Activated naive CD4-positive, alpha-beta T cell treated with anti-CD3 and anti-CD28 coated beads for 36 hours (primary cell): ENCODE measurements at regions of chr11 and their contacts with region 1.

Region 1: GRCh38 chr11:1694064-1694845 is 2.7 kb upstream of the KRTAP5-6 start:
- DNase-seq: peak; percentile 81
- H3K4me3 Mint-ChIP-seq: no peak overlapping the region
- H3K27ac Mint-ChIP-seq: no peak overlapping the region
- H3K4me1 Mint-ChIP-seq: peaks cover 3% of the 10 kb centered on the region
- H3K27me3 Mint-ChIP-seq: peaks cover 9% of the 10 kb centered on the region

Region 2: GRCh38 chr11:1113405-1114201 is 580.7 kb before region 1 on chr11:
- CTCF ChIA-PET with region 1: no interaction called
- intact Hi-C with region 1: no loop called
- DNase-seq: no peak
- H3K4me3 Mint-ChIP-seq: no peak overlapping the region
- H3K27ac Mint-ChIP-seq: no peak overlapping the region
- H3K4me1 Mint-ChIP-seq: no peaks in the 10 kb centered on the region
- H3K27me3 Mint-ChIP-seq: no peaks in the 10 kb centered on the region

Region 3: GRCh38 chr11:1682225-1682905 is 11.9 kb before region 1 on chr11:
- CTCF ChIA-PET with region 1: interaction called, 23 read pairs
- intact Hi-C with region 1: no loop called
- DNase-seq: no peak
- H3K4me3 Mint-ChIP-seq: no peak overlapping the region
- H3K27ac Mint-ChIP-seq: no peak overlapping the region
- H3K4me1 Mint-ChIP-seq: no peaks in the 10 kb centered on the region
- H3K27me3 Mint-ChIP-seq: peaks cover 7% of the 10 kb centered on the region

Region 4: DNA sequence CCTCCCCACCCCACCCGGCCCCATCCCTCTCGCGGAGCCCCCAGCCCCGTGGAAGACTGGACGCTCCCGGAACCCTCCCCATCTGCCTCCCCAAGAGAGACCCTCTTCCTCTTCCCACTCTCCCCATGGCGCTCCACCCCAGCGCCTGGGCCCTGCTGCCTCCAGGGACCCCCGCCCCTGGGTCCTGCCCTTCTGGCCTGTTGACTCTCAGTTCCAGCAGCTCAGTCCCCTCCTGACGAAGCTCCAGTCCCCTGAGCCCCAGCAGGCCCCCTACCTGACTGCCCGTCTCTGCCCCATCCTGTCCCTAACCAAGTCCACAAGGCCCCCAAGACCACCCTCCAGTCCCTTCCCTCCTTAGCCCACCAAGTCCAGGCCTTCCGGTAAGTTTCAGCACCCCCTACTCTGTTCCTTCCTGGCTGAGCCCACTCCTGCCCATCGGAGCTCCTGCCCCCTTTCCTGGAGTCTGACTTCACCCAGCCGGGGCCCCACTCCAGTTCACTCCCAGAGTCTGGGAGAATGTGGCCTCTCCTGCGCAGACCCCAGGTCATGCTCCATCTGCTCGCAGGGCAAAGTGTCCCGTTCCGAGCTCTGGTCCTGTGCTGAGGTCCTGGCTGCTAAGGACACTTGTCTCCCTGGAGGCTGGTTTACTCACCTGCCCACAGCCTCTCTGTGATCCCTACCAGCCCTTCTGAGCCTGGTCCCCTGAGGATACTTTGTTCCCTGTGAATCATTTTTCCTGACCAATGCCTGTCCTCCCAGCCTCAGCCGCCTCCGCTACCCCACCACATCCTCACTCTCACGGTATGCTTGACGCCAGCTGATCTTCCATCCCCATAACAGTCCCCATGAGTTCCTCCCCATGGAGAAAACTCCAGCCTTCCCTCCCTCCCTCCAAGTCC is 55.4 kb after region 1 on chr11:
- CTCF ChIA-PET with region 1: interaction called, 3 read pairs
- intact Hi-C with region 1: loop called (anchors 10 kb)
- DNase-seq: no peak
- H3K4me3 Mint-ChIP-seq: no peak overlapping the region
- H3K27ac Mint-ChIP-seq: no peak overlapping the region
- H3K4me1 Mint-ChIP-seq: peaks cover 15% of the 10 kb centered on the region
- H3K27me3 Mint-ChIP-seq: peaks cover 13% of the 10 kb centered on the region

Region 5: GRCh38 chr11:1827095-1827813 is 133.0 kb after region 1 on chr11:
- CTCF ChIA-PET with region 1: interaction called, 232 read pairs
- intact Hi-C with region 1: loop called (anchors 1 kb)
- DNase-seq: no peak
- H3K4me3 Mint-ChIP-seq: no peak overlapping the region
- H3K27ac Mint-ChIP-seq: no peak overlapping the region
- H3K4me1 Mint-ChIP-seq: no peaks in the 10 kb centered on the region
- H3K27me3 Mint-ChIP-seq: peaks cover 2% of the 10 kb centered on the region

Region 6: DNA sequence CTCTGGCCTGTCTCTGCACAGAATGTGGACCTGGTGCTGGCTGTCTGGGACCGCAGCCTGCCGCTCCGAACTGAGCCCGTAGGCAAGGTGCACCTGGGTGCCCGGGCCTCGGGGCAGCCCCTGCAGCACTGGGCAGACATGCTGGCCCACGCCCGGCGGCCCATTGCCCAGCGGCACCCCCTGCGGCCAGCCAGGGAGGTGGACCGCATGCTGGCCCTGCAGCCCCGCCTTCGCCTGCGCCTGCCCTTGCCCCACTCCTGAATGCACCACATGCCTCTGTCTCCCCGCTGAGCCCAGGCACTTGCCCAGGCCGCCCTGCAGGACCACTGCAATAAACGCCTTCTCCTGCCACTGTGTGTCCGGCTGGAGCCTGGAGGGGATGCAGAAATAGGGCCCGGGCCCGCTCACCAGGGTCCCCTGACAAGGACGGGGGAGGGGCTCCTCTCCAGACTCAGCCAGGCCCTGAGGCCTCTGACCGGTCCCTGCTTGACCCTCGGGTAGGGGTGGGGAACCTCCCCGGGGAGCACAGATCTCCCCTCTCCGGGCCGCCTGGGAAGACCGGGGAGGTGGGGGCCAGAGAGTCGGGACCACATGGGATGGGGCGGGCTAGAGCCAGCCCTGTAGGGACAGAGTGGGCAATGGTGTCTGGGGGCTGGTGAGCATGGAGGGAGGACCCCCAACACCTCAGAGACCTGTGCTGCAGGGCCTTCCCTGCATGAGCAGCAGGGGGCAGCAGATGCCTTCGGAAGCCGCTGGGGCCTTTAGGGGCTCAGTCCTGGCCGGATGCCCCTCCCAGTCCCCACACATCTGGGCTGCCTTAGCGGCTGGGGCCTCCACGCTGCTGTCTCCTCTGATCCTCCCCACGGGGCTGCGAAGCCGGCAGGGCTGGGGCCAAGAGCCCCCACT is 143.2 kb after region 1 on chr11:
- CTCF ChIA-PET with region 1: interaction called, 232 read pairs
- intact Hi-C with region 1: loop called (anchors 1 kb)
- DNase-seq: peak; percentile 77
- H3K4me3 Mint-ChIP-seq: no peak overlapping the region
- H3K27ac Mint-ChIP-seq: no peak overlapping the region
- H3K4me1 Mint-ChIP-seq: no peaks in the 10 kb centered on the region
- H3K27me3 Mint-ChIP-seq: no peaks in the 10 kb centered on the region

Region 7: DNA sequence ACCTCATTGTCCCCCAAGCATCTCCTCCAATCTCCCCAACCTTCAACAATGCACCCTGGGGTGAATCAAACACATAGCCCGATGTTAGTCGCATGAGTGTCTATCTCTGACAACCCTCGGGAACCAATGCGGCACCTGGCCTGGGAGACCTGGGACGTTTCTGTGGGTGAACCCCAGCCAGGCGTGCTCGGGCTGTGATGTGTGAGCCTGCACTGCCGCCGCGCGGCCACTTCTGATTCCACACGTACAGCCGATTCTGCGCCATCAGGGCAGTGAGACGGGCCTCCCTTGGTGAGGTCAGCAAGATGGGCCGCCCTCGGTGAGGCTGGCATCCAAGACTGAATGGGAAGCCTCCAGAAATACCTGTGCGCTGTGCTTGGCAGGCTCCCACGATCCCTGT is 308.6 kb after region 1 on chr11:
- CTCF ChIA-PET with region 1: interaction called, 43 read pairs
- intact Hi-C with region 1: no loop called
- DNase-seq: no peak
- H3K4me3 Mint-ChIP-seq: no peak overlapping the region
- H3K27ac Mint-ChIP-seq: no peak overlapping the region
- H3K4me1 Mint-ChIP-seq: no peaks in the 10 kb centered on the region
- H3K27me3 Mint-ChIP-seq: no peaks in the 10 kb centered on the region